Dorsolateral prefrontal cortex (tissue), 120 donors: ENCODE measurements at regions of chr5 and their contacts with region 1.

Region 1: GRCh38 chr5:157172403-157172802 is 6.3 kb upstream of the GARIN3 start:
- DNase-seq: no peak
- H3K4me3 ChIP-seq: no peak overlapping the region
- H3K27ac ChIP-seq: no peak overlapping the region
- H3K27me3 ChIP-seq: peaks cover 0 to 12% (median 0%) of the 10 kb centered on the region in 45 donors
- CTCF ChIP-seq: no peak

Region 2: DNA sequence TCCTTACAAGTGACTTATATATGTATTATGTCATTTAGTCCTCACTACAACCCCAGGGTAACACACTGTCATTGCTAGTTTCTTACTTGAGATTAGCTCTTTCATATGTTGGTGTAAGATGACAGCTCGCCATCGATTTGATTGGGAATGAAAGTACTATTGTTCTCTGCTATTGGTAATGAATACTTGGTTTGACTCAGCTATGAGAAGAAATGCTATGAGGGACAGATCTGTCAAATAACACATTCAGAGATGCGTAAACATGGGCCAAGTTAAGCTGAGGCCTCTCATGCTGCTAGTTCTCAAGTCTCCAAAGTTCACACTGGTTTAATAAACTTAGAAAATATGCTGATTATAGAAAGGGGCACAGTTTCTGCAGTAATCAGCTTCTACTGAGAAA is 702.8 kb before region 1 on chr5:
- intact Hi-C with region 1: no loop called
- DNase-seq: no peak
- H3K4me3 ChIP-seq: peak overlapping the region in 2 of 59 donors; percentile 1 to 12
- H3K27ac ChIP-seq: peak overlapping the region in 33 of 59 donors; percentile 3 to 87 (median 65)
- H3K27me3 ChIP-seq: no peaks in the 10 kb centered on the region
- CTCF ChIP-seq: no peak

Region 3: GRCh38 chr5:157051604-157052245 is 120.7 kb before region 1 on chr5:
- intact Hi-C with region 1: loop called in 1 of 2 experiments (anchors 2 kb)
- DNase-seq: no peak
- H3K4me3 ChIP-seq: no peak overlapping the region
- H3K27ac ChIP-seq: no peak overlapping the region
- H3K27me3 ChIP-seq: no peaks in the 10 kb centered on the region
- CTCF ChIP-seq: no peak